ENCODE measurements at regions of chr12 and their contacts with region 1.

Region 1: DNA sequence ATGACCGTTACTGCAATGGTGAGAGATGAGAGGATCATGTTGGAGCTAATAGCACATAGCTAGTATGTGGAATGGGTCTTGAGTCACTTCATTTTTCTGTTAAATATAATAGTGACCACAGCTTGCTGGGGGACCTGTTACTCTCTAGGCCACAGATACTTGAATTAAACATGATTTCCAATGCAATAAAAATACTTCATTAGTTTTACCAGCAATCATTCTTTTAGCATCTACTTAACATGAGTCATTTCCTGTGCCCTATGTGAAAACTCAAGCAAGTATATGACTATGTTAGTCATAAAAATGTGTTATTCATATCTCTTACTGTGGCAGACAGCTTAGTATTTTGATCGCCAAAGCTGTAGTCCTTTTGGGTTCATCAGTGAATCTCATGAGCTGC is 798.8 kb downstream of the SLC16A7 start:
- DNase-seq: peak; percentile 92
- H3K4me3 ChIP-seq: no peak overlapping the region
- H3K27me3 ChIP-seq: no peaks in the 10 kb centered on the region
- CTCF ChIP-seq: no peak

Region 2: GRCh38 chr12:59895166-59895775 is 499.4 kb before region 1 on chr12:
- CTCF ChIA-PET with region 1: no interaction called
- POLR2A ChIA-PET with region 1: no interaction called
- DNase-seq: no peak
- H3K4me3 ChIP-seq: no peak overlapping the region
- H3K27me3 ChIP-seq: no peaks in the 10 kb centered on the region
- CTCF ChIP-seq: no peak

Region 3: GRCh38 chr12:60106214-60106613 is 288.5 kb before region 1 on chr12:
- CTCF ChIA-PET with region 1: no interaction called
- POLR2A ChIA-PET with region 1: no interaction called
- DNase-seq: no peak
- H3K4me3 ChIP-seq: no peak overlapping the region
- H3K27me3 ChIP-seq: no peaks in the 10 kb centered on the region
- CTCF ChIP-seq: peak; percentile 29

Region 4: DNA sequence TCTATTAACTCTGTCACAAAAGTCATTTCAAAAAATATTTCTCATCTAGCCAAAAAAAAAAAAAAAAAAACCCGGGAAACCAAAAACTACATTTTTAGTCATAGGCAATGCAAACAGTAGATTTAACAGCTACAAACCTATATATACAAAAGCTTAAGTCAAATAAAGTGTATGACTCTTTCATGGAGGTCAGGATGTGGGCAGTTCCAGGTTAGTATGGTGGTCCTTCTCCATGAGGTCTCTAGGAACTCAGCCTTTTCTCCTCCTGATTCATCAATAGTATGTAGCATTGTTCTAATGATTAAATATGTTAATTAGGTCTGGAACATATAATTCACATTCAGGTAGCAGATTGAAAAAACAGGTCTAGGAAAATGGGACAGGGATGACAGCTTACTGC is 212.3 kb before region 1 on chr12:
- CTCF ChIA-PET with region 1: no interaction called
- POLR2A ChIA-PET with region 1: interaction called, 15 read pairs
- DNase-seq: no peak
- H3K4me3 ChIP-seq: no peak overlapping the region
- H3K27me3 ChIP-seq: no peaks in the 10 kb centered on the region
- CTCF ChIP-seq: no peak

Measured in BJ (cell line).